ENCODE measurements at regions of chrX and their contacts with region 1.

Region 1: DNA sequence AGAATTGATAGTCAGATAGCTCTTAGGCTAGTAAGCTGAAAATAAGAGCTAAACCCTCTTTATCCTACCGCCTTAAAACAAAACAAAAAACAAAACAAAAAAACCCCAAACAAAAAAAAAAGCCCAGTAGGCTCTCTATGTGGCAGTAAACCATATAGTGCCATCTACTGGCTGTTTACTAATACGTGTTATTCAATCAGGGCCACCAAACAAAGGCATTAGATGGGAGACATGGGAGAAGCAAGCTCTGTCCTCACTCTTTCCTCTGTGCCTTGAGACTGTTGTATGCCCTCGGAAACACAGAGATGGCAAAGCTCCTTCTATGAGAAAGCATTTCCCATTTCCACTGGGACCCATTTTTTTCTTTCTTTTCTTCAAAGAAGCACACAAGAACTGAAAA is 148.8 kb upstream of the MID1 start:
- DNase-seq: peak; percentile 36
- H3K4me3 ChIP-seq: no peak overlapping the region
- H3K27ac ChIP-seq: no peak overlapping the region
- H3K4me1 ChIP-seq: peaks cover 4% of the 10 kb centered on the region
- H3K27me3 ChIP-seq: no peaks in the 10 kb centered on the region
- CTCF ChIP-seq: peak; percentile 24 to 48
- POLR2A ChIP-seq: no peak

Region 2: DNA sequence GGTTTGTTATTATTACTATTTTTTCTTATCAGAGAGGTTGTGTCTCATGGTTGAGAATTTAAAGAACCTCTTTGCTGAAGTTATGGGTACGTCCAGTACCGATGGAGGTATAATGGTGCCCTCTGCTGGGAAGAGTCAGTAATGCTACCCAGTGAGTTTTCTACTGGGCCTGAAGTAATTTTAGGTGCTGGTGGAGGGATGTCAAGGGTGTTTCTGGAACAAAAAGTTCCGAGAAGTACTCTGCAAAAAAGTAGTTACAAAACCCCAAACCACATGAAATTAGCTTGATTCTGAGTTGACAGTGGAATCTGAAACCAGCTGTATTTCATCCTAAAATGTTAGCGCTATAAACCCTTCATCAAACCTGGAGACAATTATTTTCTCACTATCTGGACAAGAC is 46.3 kb before region 1 on chrX:
- CTCF ChIA-PET with region 1: interaction called, 47 read pairs
- POLR2A ChIA-PET with region 1: no interaction called
- dilution Hi-C with region 1: no loop called
- intact Hi-C with region 1: loop called (anchors 2 kb)
- DNase-seq: peak; percentile 54
- H3K4me3 ChIP-seq: no peak overlapping the region
- H3K27ac ChIP-seq: no peak overlapping the region
- H3K4me1 ChIP-seq: peaks cover 2% of the 10 kb centered on the region
- H3K27me3 ChIP-seq: no peaks in the 10 kb centered on the region
- CTCF ChIP-seq: peak; percentile 49 to 55
- POLR2A ChIP-seq: no peak

Region 3: DNA sequence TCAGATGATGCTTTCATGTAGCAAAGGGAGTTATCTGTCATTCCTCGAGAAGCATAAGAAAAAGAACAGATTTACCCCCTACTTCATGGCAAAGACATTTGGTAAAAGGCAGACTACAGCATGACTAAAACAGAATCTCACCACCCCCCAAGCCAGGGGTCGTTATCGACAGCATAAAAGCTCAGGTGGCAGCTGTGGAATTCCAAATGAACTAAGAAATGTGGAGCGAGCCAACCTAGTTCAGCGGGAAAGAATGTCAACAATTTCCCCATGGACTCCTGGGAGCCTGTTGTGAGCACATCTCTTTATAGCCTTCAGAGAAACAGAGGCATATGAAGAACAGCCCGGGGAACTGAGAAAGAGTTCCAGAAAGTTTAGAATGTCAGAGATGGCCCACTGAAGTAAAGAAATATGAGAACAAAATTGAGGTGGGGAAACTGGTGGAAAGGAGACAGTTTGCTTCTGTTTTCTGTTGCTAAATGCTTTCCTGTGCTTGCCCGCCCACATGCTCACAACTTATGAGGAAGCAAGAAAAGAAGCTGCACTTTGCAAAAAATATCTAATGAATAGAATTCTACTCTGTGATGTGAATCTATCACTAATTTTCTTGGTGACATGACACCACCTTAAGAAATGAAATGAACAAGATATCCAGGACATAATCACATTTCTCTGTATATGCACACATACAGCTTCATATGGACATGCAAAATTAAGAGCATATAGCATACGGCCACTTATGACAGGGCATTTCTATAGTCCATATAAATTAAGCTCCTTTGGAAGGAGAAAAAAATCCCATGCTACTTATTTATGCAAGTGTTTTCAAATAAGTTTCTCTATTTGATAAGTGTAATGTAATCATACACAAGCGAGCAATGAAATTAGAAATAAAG is 13.5 kb before region 1 on chrX:
- CTCF ChIA-PET with region 1: interaction called, 10 read pairs
- POLR2A ChIA-PET with region 1: no interaction called
- dilution Hi-C with region 1: no loop called
- intact Hi-C with region 1: no loop called
- DNase-seq: peak; percentile 58
- H3K4me3 ChIP-seq: no peak overlapping the region
- H3K27ac ChIP-seq: peak overlapping the region; percentile 44
- H3K4me1 ChIP-seq: peaks cover 9% of the 10 kb centered on the region
- H3K27me3 ChIP-seq: no peaks in the 10 kb centered on the region
- CTCF ChIP-seq: no peak
- POLR2A ChIP-seq: no peak

Region 4: GRCh38 chrX:11381464-11381863 is 612.3 kb after region 1 on chrX:
- CTCF ChIA-PET with region 1: no interaction called
- POLR2A ChIA-PET with region 1: no interaction called
- dilution Hi-C with region 1: no loop called
- intact Hi-C with region 1: no loop called
- DNase-seq: peak; percentile 74
- H3K4me3 ChIP-seq: no peak overlapping the region
- H3K27ac ChIP-seq: no peak overlapping the region
- H3K4me1 ChIP-seq: peaks cover 3% of the 10 kb centered on the region
- H3K27me3 ChIP-seq: no peaks in the 10 kb centered on the region
- CTCF ChIP-seq: peak; percentile 35 to 46
- POLR2A ChIP-seq: no peak

Measured in endothelial cell of umbilical vein (primary cell).